Panc1 (cell line): ENCODE measurements at regions of chr5 and their contacts with region 1.

Region 1: DNA sequence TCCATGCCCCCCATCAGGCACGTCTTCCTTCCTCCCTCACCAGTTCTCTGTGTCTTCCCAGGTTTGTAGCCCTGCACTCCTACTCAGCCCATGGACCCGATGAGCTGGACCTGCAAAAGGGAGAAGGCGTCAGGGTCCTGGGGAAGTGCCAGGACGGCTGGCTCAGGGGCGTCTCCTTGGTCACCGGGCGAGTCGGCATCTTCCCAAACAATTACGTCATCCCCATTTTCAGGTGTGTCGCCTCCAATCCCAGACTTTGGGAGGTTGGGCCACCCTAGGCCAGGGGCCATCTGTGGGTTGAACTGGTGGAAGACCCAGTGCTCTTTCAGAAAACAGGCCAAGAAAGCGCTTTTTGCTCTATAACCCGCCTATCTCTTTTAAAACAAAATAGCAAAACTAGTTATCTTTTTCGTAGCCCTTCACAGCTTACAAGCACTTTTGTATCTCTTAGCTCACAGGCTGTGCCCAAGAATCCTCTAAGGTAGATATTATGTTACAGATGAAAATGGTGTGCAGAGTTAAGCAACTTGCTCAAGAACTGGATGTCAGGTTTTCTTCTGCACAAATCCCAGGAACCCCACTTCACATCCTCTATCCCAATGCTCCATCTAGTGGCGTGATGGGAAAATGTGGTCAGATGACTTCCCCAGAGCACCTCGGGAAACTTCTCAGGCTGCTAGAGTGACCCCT is 56.2 kb downstream of the PLAC8L1 start:
- DNase-seq: peak; percentile 22
- ATAC-seq: peak; percentile 82
- H3K4me3 ChIP-seq: no peak overlapping the region
- H3K27ac ChIP-seq: no peak overlapping the region
- H3K4me1 ChIP-seq: no peaks in the 10 kb centered on the region
- H3K27me3 ChIP-seq: no peaks in the 10 kb centered on the region
- CTCF ChIP-seq: peak; percentile 81

Region 2: DNA sequence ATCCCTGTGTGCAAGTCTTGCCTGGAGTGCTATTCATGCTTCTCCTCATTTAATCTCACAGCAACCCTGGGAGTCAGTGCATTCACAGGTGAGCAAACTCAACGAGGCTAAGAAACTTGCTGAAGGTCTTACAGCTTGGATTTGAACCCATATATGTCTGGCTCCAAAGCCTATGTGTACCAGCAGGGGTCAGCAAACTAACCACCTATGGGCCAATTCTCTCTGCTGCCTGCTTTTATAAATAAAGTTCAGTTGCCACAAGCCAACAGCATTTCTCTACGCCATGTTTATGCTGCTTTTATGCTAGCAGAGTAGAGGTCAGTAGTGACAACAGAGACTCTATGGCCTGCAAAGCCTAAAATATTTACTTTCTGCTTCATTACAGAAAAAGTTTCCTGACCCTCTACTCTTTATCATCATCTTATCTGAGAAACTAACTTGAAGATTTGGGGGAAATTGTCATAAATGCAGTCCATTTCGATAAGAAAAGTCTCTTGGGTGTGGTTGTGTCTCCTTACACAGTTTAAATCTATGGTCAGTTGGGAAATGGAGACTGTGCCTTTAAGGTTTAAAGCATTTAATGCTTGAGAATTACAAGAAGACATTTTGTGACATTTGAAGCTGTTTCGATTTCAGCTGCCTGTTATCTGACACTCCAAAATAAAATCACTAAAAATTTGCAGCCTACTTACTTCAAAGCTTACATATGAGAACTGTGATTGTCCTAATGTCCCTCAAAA is 351.7 kb before region 1 on chr5:
- CTCF ChIA-PET with region 1: no interaction called
- POLR2A ChIA-PET with region 1: no interaction called
- in situ Hi-C with region 1: no loop called
- intact Hi-C with region 1: loop called (anchors 5 kb)
- DNase-seq: peak; percentile 30
- ATAC-seq: peak; percentile 71
- H3K4me3 ChIP-seq: no peak overlapping the region
- H3K27ac ChIP-seq: no peak overlapping the region
- H3K4me1 ChIP-seq: no peaks in the 10 kb centered on the region
- H3K27me3 ChIP-seq: no peaks in the 10 kb centered on the region
- CTCF ChIP-seq: peak; percentile 74

Region 3: DNA sequence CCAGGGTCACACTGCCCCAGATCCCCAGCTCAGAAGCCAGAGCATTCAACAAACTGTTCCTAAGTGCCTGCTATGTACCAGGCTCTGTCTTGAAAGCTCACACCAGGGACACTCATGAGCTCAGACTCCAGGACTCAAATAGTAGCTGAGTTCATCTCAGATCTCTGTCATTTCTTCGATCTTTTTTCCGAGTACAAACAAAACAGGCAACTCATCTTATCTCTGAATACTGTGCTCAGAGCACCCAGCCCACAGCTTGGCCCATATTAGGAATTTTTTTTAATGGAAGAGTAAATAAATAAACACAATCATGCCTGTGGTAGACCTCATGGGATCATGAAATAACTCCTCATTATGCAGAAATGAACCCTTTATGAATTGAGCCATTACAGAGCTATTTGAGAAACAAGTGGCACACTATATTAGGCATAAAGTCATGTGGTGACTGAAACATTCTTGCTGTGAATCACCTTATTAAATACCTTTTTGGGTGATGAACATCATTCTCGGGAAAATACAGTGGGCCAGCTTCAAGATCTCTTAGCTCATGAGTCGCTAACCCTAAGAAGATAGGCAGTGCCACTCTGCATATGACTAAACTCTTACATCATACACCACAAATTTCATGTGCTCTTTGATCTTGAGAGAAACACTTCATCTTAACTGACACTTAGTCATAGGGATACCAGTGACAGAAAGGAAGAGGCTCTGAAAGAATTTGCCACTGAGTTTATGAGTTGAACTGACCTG is 102.9 kb before region 1 on chr5:
- CTCF ChIA-PET with region 1: no interaction called
- POLR2A ChIA-PET with region 1: interaction called, 16 read pairs
- in situ Hi-C with region 1: no loop called
- intact Hi-C with region 1: loop called (anchors 10 kb)
- DNase-seq: peak; percentile 98
- ATAC-seq: peak; percentile 77
- H3K4me3 ChIP-seq: peak overlapping the region in 1 of 2 experiments; percentile 24; a peak in 2 of 4 replicates
- H3K27ac ChIP-seq: peak overlapping the region; percentile 80
- H3K4me1 ChIP-seq: peaks cover 58% of the 10 kb centered on the region
- H3K27me3 ChIP-seq: no peaks in the 10 kb centered on the region
- CTCF ChIP-seq: no peak